Activated T-helper 1 cell treated with anti-CD3 and anti-CD28 coated beads, Interleukin-12 subunit alpha, Interleukin-12 subunit beta, Interleukin-2, Interleukin-4 antibody, amounts not matched to agents 30 ng/mL and 10 ng/mL and 1 ng/mL, durations not matched to agents 14 hours and 24 hours and 36 hours (primary cell): ENCODE measurements at regions of chr15 and their contacts with region 1.

Region 1: DNA sequence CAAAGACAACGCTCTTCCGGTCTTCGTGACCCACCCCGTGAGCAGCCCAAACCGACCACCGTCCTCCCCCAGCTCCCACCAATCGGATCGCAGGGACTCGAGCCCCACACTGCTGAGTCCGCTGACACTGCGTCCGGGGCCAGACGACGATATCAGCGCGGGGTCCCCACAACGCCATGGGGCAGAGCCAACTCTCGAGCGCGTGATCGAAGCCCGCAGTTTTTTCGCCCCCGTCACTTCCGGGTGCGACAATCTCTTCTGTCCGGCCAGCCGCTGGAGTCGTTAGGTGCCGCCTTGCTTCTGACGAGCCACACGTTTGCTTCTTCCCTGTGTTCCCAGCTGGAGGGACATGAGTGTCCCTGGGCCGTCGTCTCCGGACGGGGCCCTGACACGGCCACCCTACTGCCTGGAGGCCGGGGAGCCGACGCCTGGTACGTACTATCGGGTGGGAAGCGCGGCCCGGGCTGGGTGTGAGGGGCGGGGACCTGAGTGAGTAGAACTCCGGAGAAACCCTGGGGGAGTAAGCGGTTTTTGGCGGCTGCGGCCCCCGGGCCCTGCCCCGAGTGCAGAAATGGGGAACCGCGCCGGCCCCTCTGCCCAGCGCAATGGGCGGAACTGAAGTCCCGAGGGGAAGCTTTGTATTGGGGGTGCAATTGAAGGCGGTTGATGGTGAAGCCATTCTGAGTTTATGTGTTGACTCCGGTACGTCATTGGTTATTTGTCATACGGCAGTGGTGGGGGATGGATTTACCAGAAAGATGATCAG is at the start of gene BLOC1S6:
- DNase-seq: peak; percentile 84
- H3K4me3 Mint-ChIP-seq: peak within 1 kb of the TSS; percentile 100
- H3K27ac Mint-ChIP-seq: peak within 1 kb of the TSS; percentile 100
- H3K4me1 Mint-ChIP-seq: peaks cover 43% of the 10 kb centered on the region
- H3K27me3 Mint-ChIP-seq: no peaks in the 10 kb centered on the region
- total RNA-seq, gene BLOC1S6: 50.6 TPM in 2 replicates

Region 2: DNA sequence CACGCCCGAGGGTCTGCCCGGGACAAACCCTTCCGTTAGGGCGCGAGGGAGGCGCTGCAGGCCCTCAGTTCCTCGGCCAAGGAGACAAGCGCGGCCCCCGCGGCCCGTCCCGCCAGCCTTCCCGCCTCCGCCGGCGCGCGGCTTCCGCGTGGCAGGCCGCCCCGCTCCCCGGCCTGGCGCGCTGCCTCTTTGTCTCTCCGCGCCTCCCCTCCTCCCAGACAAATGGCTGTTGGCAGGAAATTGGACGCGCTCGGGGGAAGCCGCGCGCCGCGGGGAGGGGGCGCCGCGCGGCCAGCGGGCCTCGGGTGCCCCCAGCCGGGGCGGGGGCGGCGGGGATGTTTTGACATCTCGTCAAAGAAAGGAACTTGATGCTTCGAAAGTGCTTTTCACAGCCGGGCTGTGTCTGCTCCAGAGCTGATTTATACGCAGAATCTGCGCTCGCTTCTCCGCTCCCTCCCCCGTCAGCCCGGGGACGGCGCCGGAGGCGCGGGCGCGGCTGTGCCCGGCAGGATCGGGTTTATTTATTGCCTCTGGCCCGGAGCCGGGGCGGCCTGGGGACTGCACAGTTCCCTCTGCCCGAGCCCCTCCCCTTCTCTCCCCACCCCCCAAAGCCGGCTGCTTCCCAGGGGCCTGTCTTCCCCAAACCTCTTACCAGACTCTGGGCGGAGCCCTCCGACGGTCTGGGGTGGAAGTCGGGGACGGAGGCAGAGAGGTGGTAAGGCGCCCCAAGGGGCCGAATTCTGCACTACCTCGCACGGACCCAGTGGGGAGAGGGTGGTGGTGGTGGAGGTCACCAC is 420.2 kb before region 1 on chr15:
- intact Hi-C with region 1: loop called (anchors 10 kb)
- DNase-seq: peak; percentile 77
- H3K4me3 Mint-ChIP-seq: peak overlapping the region; percentile 75
- H3K27ac Mint-ChIP-seq: peak overlapping the region; percentile 81
- H3K4me1 Mint-ChIP-seq: peaks cover 21% of the 10 kb centered on the region
- H3K27me3 Mint-ChIP-seq: no peaks in the 10 kb centered on the region

Region 3: DNA sequence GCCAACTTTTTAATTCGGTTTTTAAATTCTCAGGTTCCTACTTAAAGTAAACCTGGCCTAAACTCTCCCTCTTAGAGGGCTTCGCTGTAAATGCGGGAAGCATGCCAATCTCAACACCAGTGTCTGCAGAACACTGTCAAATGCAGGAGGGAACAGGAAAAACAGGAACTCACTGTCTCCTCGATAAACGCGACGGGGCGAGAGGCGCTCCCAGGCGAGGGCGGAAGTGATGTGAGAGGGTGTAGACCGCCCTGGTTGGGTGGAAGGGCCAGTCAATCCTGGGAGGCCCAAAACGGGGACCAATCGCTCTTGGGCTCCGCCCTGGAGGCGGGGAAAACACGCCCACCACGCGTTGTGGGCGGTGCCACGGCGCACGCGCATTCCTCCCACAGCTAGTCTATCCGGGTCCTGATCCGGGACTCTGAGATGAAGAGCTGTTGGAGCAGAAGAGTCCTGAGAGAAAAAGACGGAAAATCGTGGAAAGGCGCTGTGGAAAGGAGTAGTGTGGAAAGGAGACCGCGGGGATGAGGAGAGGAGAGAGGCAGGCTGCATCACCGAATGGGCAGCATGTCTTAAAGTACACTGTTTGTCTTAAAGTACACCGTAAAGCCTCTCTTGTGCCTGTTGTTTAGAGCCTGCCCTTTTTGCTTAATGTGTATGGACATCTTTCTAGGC is 308.1 kb before region 1 on chr15:
- intact Hi-C with region 1: loop called (anchors 1 kb)
- DNase-seq: peak; percentile 95
- H3K4me3 Mint-ChIP-seq: peak overlapping the region; percentile 90
- H3K27ac Mint-ChIP-seq: peak overlapping the region; percentile 77
- H3K4me1 Mint-ChIP-seq: peaks cover 7% of the 10 kb centered on the region
- H3K27me3 Mint-ChIP-seq: peaks cover 12% of the 10 kb centered on the region

Region 4: GRCh38 chr15:45522328-45523160 is 64.7 kb before region 1 on chr15 and contains the start of gene SLC30A4:
- intact Hi-C with region 1: loop called (anchors 1 kb)
- DNase-seq: peak; percentile 68
- H3K4me3 Mint-ChIP-seq: peak within 1 kb of the TSS; percentile 88
- H3K27ac Mint-ChIP-seq: peak within 1 kb of the TSS; percentile 66
- H3K4me1 Mint-ChIP-seq: peaks cover 22% of the 10 kb centered on the region
- H3K27me3 Mint-ChIP-seq: peaks cover 25% of the 10 kb centered on the region
- total RNA-seq, gene SLC30A4: 1.6 and 2.1 TPM in 2 replicates

Region 5: GRCh38 chr15:45611305-45611704 is 24.0 kb after region 1 on chr15:
- intact Hi-C with region 1: loop called (anchors 2 kb)
- DNase-seq: no peak
- H3K4me3 Mint-ChIP-seq: no peak overlapping the region
- H3K27ac Mint-ChIP-seq: no peak overlapping the region
- H3K4me1 Mint-ChIP-seq: peaks cover 10% of the 10 kb centered on the region
- H3K27me3 Mint-ChIP-seq: no peaks in the 10 kb centered on the region

Region 6: GRCh38 chr15:45634442-45635190 is 47.3 kb after region 1 on chr15 and contains the start of gene SQOR:
- intact Hi-C with region 1: loop called (anchors 1 kb)
- DNase-seq: peak; percentile 67
- H3K4me3 Mint-ChIP-seq: peak within 1 kb of the TSS; percentile 99
- H3K27ac Mint-ChIP-seq: peak within 1 kb of the TSS; percentile 94
- H3K4me1 Mint-ChIP-seq: peaks cover 50% of the 10 kb centered on the region
- H3K27me3 Mint-ChIP-seq: peaks cover 16% of the 10 kb centered on the region
- total RNA-seq, gene SQOR: 96.0 and 100 TPM in 2 replicates